ENCODE measurements at regions of chr12 and their contacts with region 1.

Region 1: DNA sequence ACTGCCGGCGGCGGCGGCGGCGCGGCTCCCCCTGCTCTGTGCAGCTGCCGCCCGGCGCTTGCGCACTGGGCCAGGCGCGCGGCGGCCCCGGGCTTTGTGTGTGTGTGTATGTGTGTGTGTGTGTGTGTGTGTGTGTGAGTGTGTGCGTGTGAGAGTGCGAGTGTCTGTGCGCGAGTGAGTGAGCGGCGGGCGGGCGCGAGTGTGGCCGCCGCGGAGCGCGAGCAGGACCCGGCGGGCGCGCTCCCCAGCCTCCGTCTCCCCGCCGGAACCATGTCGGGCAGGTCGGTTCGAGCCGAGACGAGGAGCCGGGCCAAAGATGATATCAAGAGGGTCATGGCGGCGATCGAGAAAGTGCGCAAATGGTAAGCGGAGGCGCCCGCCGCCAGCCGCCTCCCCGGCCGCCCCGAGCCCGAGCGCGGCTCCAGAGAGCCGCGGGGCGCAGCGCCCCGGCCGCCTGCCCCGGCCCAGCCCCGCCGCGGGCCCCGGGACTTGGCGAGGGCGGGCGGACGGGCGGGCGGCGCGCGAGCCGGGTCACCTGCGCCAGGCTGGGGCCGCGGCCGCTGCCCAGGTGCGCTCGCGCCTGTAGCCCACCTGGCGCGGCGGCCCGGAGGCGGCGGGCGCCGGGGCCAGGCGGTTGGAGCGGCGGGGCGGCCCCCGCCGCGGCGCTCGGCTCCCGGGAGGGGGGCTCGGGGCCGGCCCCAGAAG is at the start of gene BCL7A:
- DNase-seq: peak; percentile 72
- ATAC-seq: peak; percentile 76
- H3K4me3 Mint-ChIP-seq: peak within 1 kb of the TSS; percentile 91
- H3K27ac Mint-ChIP-seq: peak within 1 kb of the TSS; percentile 95
- H3K4me1 Mint-ChIP-seq: peaks cover 46% of the 10 kb centered on the region
- H3K27me3 Mint-ChIP-seq: peaks cover 2% of the 10 kb centered on the region
- CTCF ChIP-seq: no peak
- total RNA-seq, gene BCL7A: 38.6 and 41.4 TPM in 2 replicates

Region 2: GRCh38 chr12:121467115-121467793 is 554.7 kb before region 1 on chr12:
- CTCF ChIA-PET with region 1: no interaction called
- POLR2A ChIA-PET with region 1: no interaction called
- intact Hi-C with region 1: loop called (anchors 5 kb)
- DNase-seq: peak; percentile 87
- ATAC-seq: peak; percentile 86
- H3K4me3 Mint-ChIP-seq: peak overlapping the region; percentile 41
- H3K27ac Mint-ChIP-seq: no peak overlapping the region
- H3K4me1 Mint-ChIP-seq: peaks cover 58% of the 10 kb centered on the region
- H3K27me3 Mint-ChIP-seq: no peaks in the 10 kb centered on the region
- CTCF ChIP-seq: no peak

Region 3: GRCh38 chr12:121802846-121803630 is 218.9 kb before region 1 on chr12:
- CTCF ChIA-PET with region 1: no interaction called
- POLR2A ChIA-PET with region 1: interaction called, 7 read pairs
- intact Hi-C with region 1: loop called (anchors 5 kb)
- DNase-seq: peak; percentile 91
- ATAC-seq: peak; percentile 40
- H3K4me3 Mint-ChIP-seq: peak overlapping the region; percentile 93
- H3K27ac Mint-ChIP-seq: peak overlapping the region; percentile 100
- H3K4me1 Mint-ChIP-seq: peaks cover 57% of the 10 kb centered on the region
- H3K27me3 Mint-ChIP-seq: no peaks in the 10 kb centered on the region
- CTCF ChIP-seq: no peak

Region 4: GRCh38 chr12:121849665-121850064 is 172.3 kb before region 1 on chr12:
- CTCF ChIA-PET with region 1: no interaction called
- POLR2A ChIA-PET with region 1: no interaction called
- intact Hi-C with region 1: no loop called
- DNase-seq: no peak
- ATAC-seq: no peak
- H3K4me3 Mint-ChIP-seq: no peak overlapping the region
- H3K27ac Mint-ChIP-seq: no peak overlapping the region
- H3K4me1 Mint-ChIP-seq: no peaks in the 10 kb centered on the region
- H3K27me3 Mint-ChIP-seq: peaks cover 2% of the 10 kb centered on the region
- CTCF ChIP-seq: no peak

Region 5: GRCh38 chr12:121955258-121956235 is 66.4 kb before region 1 on chr12:
- CTCF ChIA-PET with region 1: no interaction called
- POLR2A ChIA-PET with region 1: interaction called, 3 read pairs
- intact Hi-C with region 1: loop called (anchors 5 kb)
- DNase-seq: no peak
- ATAC-seq: peak; percentile 21
- H3K4me3 Mint-ChIP-seq: no peak overlapping the region
- H3K27ac Mint-ChIP-seq: no peak overlapping the region
- H3K4me1 Mint-ChIP-seq: peaks cover 21% of the 10 kb centered on the region
- H3K27me3 Mint-ChIP-seq: no peaks in the 10 kb centered on the region
- CTCF ChIP-seq: no peak

Region 6: DNA sequence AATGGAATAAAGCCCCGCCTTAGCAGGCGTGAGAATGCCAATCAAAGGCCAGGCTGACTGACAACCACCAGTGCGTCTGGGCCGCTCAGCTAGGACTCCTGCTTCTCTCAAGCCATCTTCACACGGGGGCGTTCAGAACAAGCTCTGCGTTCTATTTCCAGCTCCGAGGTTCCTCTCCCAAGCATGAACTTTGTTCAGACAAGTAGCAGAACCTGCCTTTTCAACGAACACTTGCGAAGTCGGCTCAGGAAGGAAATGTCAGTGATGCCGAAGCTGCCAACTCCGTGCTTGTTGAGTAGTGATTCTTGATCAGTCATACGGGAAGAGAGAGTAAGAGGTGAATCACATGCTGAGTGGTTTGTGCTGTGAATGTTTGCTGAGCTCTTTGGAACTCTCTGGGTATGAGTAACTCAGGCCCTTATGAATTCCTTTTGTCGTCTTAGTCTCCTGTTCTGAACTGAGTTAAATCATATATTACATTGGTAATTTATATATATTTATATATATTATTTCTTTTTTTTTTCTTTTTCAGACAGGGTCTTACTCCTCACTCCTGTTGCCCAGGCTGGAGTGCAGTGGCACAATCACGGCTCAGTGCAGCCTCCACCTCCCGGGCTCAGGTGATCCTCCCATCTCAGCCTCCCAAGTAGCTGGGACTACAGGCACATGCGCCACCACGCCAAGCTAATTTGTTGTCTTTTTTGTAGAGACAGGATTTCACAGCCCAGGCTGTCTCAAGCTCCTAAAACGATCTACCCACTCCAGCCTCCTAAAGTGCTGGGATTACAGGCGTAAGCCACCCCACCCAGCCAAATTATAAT is 29.7 kb before region 1 on chr12:
- CTCF ChIA-PET with region 1: interaction called, 7 read pairs
- POLR2A ChIA-PET with region 1: interaction called, 86 read pairs
- intact Hi-C with region 1: loop called (anchors 5 kb)
- DNase-seq: peak; percentile 48
- ATAC-seq: peak; percentile 87
- H3K4me3 Mint-ChIP-seq: peak overlapping the region; percentile 75
- H3K27ac Mint-ChIP-seq: peak overlapping the region; percentile 97
- H3K4me1 Mint-ChIP-seq: peaks cover 49% of the 10 kb centered on the region
- H3K27me3 Mint-ChIP-seq: no peaks in the 10 kb centered on the region
- CTCF ChIP-seq: no peak

Region 7: DNA sequence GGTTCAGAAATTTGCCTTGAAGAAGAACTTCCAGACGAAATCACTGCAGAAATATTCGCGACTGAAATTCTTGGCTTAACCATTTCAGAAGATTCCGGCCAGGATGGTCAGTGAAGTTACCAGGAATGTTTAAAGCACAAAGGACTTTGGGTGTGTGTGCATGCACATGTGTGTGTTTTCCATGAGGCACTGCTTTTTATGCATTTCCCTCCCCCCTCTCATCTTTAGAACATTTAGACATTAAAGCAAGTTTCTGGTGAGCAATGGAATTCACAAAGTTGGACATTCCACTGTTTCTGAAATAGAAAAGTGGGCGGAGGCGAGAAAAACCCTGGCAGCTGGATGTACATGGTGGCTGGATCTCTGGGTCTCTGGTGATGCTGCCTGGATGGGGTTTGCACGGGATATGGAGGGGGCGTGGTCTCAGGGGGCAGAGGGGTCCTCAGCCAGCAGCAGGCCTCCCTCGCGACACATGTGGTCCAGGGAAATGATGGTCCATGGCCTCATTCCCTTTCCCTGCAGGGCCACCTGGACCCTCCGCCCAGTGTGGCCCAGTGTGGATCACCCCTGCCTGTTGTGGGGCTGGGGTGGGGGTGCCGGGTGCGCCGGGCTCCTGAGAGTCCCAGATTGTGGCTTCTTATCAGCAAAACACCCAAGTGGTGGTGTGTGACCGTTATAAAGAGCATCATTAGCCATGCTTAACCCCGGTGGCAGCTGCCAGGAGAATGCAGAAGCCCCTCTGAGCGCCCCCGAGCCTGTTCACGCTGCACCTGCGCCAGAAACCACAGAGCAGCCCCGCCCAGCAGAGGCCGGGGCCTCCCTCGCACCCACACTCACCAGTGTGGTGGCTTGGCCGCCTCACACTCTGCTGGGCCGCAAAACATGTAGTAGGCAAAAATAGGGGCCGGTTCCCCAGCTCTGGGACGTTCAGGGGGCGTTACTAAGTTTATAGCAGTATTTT is 18.0 kb before region 1 on chr12:
- CTCF ChIA-PET with region 1: interaction called, 3 read pairs
- POLR2A ChIA-PET with region 1: interaction called, 216 read pairs
- intact Hi-C with region 1: loop called (anchors 1 kb)
- DNase-seq: peak; percentile 68
- ATAC-seq: peak; percentile 86
- H3K4me3 Mint-ChIP-seq: peak overlapping the region; percentile 67
- H3K27ac Mint-ChIP-seq: peak overlapping the region; percentile 87
- H3K4me1 Mint-ChIP-seq: peaks cover 76% of the 10 kb centered on the region
- H3K27me3 Mint-ChIP-seq: peaks cover 3% of the 10 kb centered on the region
- CTCF ChIP-seq: no peak

Measured in activated B cell treated with CpG ODN at 0.5 μM for 24 hours (primary cell).